Activated T-helper 2 cell treated with anti-CD3 and anti-CD28 coated beads, Interferon-gamma antibody, Interleukin-2, Interleukin-4, amounts not matched to agents 10 μg/mL and 5 μg/mL and 100 μg/mL, durations not matched to agents 14 hours and 24 hours and 36 hours (primary cell): ENCODE measurements at regions of chr16 and their contacts with region 1.

Region 1: GRCh38 chr16:80924372-80924978 is 82.2 kb downstream of the CMC2 start:
- DNase-seq: peak; percentile 15
- H3K4me3 Mint-ChIP-seq: no peak overlapping the region
- H3K27ac Mint-ChIP-seq: no peak overlapping the region
- H3K4me1 Mint-ChIP-seq: peaks cover 3% of the 10 kb centered on the region
- H3K27me3 Mint-ChIP-seq: peaks cover 5% of the 10 kb centered on the region

Region 2: GRCh38 chr16:80417706-80418271 is 506.7 kb before region 1 on chr16:
- intact Hi-C with region 1: no loop called
- DNase-seq: no peak
- H3K4me3 Mint-ChIP-seq: no peak overlapping the region
- H3K27ac Mint-ChIP-seq: no peak overlapping the region
- H3K4me1 Mint-ChIP-seq: no peaks in the 10 kb centered on the region
- H3K27me3 Mint-ChIP-seq: no peaks in the 10 kb centered on the region

Region 3: GRCh38 chr16:80948886-80949493 is 24.5 kb after region 1 on chr16:
- intact Hi-C with region 1: loop called (anchors 1 kb)
- DNase-seq: no peak
- H3K4me3 Mint-ChIP-seq: no peak overlapping the region
- H3K27ac Mint-ChIP-seq: no peak overlapping the region
- H3K4me1 Mint-ChIP-seq: peaks cover 22% of the 10 kb centered on the region
- H3K27me3 Mint-ChIP-seq: peaks cover 4% of the 10 kb centered on the region